B cell (primary cell): ENCODE measurements at regions of chr11 and their contacts with region 1.

Region 1: GRCh38 chr11:6234387-6235107 is at the start of gene FHIP1B:
- DNase-seq: peak; percentile 100
- ATAC-seq: peak; percentile 92
- H3K4me3 ChIP-seq: peak within 1 kb of the TSS; percentile 71 to 90 (median 87)
- H3K4me3 Mint-ChIP-seq: peak within 1 kb of the TSS; percentile 98
- H3K27ac ChIP-seq: peak within 1 kb of the TSS; percentile 69 to 90
- H3K27ac Mint-ChIP-seq: peak within 1 kb of the TSS; percentile 91
- H3K4me1 ChIP-seq: peaks cover 7 to 13% of the 10 kb centered on the region in 2 donors
- H3K4me1 Mint-ChIP-seq: peaks cover 29% of the 10 kb centered on the region
- H3K27me3 ChIP-seq: peaks cover 0 to 9% (median 2%) of the 10 kb centered on the region in 4 experiments
- H3K27me3 Mint-ChIP-seq: no peaks in the 10 kb centered on the region
- CTCF ChIP-seq: no peak
- total RNA-seq, gene FHIP1B: 44.1 and 48.3 TPM in 2 replicates

Region 2: DNA sequence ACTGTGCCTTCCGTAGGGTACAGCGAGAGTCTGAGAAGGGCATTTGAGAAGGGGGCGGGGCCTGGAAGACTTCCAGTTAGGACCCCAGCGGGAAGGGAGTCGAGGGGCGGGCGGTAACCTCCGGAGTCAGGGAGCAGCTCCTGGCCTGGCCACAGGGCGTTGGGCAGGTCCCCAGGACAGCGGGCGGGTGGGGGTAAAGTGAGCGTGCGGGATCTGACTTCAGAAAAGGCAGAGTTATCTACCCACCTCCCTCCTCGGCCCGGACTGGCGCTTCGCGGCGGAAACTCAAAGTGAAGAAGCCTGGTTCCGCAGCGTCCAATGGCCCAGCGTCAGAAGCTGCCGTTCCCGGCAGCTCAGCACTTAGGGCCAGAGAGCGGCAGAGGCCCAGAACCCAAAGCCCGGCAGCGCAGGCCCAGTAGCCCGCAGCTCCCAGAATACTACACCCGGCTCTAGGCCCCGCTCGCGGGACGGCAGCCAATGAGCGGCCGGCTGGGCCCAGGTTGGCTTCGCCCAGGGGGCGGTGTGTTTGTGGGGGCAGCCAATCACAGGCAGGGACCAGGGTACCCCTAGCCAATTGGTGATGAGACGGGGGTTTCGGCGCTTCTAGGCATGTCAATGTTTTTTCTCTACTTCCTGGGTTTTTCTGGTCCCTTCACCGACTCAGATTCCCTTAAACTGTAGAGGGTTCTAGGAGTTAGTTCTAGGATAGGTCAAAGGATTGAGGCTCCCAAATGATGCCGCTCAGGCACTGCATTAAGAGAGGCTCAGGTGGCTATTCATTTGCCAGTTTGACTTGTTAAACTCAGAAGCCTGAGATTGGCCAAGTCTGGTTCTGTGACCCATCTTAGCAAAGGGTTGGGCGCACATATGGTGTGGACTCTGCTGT is 1626.5 kb before region 1 on chr11 and contains the start of gene TRIM68:
- CTCF ChIA-PET with region 1: no interaction called
- POLR2A ChIA-PET with region 1: no interaction called
- intact Hi-C with region 1: loop called (anchors 10 kb)
- DNase-seq: peak; percentile 93
- ATAC-seq: peak; percentile 99
- H3K4me3 ChIP-seq: peak within 1 kb of the TSS; percentile 65 to 89 (median 79)
- H3K4me3 Mint-ChIP-seq: peak within 1 kb of the TSS; percentile 97
- H3K27ac ChIP-seq: peak within 1 kb of the TSS; percentile 72 to 93
- H3K27ac Mint-ChIP-seq: peak within 1 kb of the TSS; percentile 94
- H3K4me1 ChIP-seq: peaks cover 21 to 29% of the 10 kb centered on the region in 2 donors
- H3K4me1 Mint-ChIP-seq: peaks cover 45% of the 10 kb centered on the region
- H3K27me3 ChIP-seq: no peaks in the 10 kb centered on the region
- H3K27me3 Mint-ChIP-seq: no peaks in the 10 kb centered on the region
- CTCF ChIP-seq: no peak
- total RNA-seq, gene TRIM68: 19.8 and 21.7 TPM in 2 replicates

Region 3: DNA sequence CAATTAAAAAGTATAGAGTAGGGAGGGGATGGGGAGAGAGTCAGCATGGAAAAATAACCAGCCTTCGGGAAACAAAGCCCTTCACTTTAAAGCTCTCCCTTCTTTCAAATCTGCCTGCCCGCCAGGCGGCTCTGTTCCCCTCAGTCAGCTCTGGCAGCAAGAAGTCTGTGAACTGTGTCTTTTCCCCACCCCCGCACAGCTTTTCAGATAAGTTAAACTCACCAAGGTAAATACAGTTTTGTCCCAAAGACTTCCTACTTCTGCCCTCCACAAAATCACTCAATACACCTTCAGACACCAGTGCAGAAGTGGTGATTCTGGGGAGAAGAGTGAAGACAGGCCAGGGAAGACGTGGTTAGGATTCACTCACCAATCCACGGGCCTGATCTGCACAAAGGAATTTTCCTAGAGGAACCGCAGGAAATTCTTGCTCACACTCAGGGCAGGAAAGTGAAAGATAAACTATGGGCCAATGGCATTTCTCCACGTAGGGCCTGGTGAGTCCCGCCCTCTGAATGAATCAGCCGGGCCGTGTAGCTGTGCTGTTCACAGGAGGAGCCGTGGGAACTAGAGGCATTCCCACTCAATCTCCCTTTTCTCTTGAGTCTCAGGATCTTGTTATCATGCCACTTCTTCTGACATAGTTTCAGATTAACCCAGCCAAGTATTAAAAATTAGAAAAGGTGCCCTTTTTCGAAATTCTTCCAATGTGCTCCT is 549.7 kb before region 1 on chr11 and contains the start of gene TRIM5:
- CTCF ChIA-PET with region 1: interaction called, 3 read pairs
- POLR2A ChIA-PET with region 1: no interaction called
- intact Hi-C with region 1: loop called (anchors 2 kb)
- DNase-seq: peak; percentile 91
- ATAC-seq: peak; percentile 75
- H3K4me3 ChIP-seq: peak within 1 kb of the TSS; percentile 61 to 94 (median 72)
- H3K4me3 Mint-ChIP-seq: peak within 1 kb of the TSS; percentile 90
- H3K27ac ChIP-seq: peak within 1 kb of the TSS; percentile 81 to 89
- H3K27ac Mint-ChIP-seq: peak within 1 kb of the TSS; percentile 90
- H3K4me1 ChIP-seq: peaks cover 20 to 35% of the 10 kb centered on the region in 2 donors
- H3K4me1 Mint-ChIP-seq: peaks cover 44% of the 10 kb centered on the region
- H3K27me3 ChIP-seq: no peaks in the 10 kb centered on the region
- H3K27me3 Mint-ChIP-seq: no peaks in the 10 kb centered on the region
- CTCF ChIP-seq: peak; percentile 79
- total RNA-seq, gene TRIM5: 35.2 and 39.5 TPM in 2 replicates

Region 4: GRCh38 chr11:6245536-6245935 is 11.0 kb after region 1 on chr11:
- CTCF ChIA-PET with region 1: no interaction called
- POLR2A ChIA-PET with region 1: no interaction called
- intact Hi-C with region 1: no loop called
- DNase-seq: no peak
- ATAC-seq: no peak
- H3K4me3 ChIP-seq: no peak overlapping the region
- H3K4me3 Mint-ChIP-seq: no peak overlapping the region
- H3K27ac ChIP-seq: no peak overlapping the region
- H3K27ac Mint-ChIP-seq: no peak overlapping the region
- H3K4me1 ChIP-seq: no peaks in the 10 kb centered on the region
- H3K4me1 Mint-ChIP-seq: no peaks in the 10 kb centered on the region
- H3K27me3 ChIP-seq: peaks cover 0 to 5% (median 2%) of the 10 kb centered on the region in 4 experiments
- H3K27me3 Mint-ChIP-seq: peaks cover 35% of the 10 kb centered on the region
- CTCF ChIP-seq: no peak

Region 5: GRCh38 chr11:6269994-6270393 is 35.4 kb after region 1 on chr11:
- CTCF ChIA-PET with region 1: no interaction called
- POLR2A ChIA-PET with region 1: no interaction called
- intact Hi-C with region 1: no loop called
- DNase-seq: no peak
- ATAC-seq: no peak
- H3K4me3 ChIP-seq: no peak overlapping the region
- H3K4me3 Mint-ChIP-seq: no peak overlapping the region
- H3K27ac ChIP-seq: no peak overlapping the region
- H3K27ac Mint-ChIP-seq: no peak overlapping the region
- H3K4me1 ChIP-seq: no peaks in the 10 kb centered on the region
- H3K4me1 Mint-ChIP-seq: no peaks in the 10 kb centered on the region
- H3K27me3 ChIP-seq: peaks cover 0 to 10% (median 4%) of the 10 kb centered on the region in 4 experiments
- H3K27me3 Mint-ChIP-seq: peaks cover 39% of the 10 kb centered on the region
- CTCF ChIP-seq: no peak

Region 6: DNA sequence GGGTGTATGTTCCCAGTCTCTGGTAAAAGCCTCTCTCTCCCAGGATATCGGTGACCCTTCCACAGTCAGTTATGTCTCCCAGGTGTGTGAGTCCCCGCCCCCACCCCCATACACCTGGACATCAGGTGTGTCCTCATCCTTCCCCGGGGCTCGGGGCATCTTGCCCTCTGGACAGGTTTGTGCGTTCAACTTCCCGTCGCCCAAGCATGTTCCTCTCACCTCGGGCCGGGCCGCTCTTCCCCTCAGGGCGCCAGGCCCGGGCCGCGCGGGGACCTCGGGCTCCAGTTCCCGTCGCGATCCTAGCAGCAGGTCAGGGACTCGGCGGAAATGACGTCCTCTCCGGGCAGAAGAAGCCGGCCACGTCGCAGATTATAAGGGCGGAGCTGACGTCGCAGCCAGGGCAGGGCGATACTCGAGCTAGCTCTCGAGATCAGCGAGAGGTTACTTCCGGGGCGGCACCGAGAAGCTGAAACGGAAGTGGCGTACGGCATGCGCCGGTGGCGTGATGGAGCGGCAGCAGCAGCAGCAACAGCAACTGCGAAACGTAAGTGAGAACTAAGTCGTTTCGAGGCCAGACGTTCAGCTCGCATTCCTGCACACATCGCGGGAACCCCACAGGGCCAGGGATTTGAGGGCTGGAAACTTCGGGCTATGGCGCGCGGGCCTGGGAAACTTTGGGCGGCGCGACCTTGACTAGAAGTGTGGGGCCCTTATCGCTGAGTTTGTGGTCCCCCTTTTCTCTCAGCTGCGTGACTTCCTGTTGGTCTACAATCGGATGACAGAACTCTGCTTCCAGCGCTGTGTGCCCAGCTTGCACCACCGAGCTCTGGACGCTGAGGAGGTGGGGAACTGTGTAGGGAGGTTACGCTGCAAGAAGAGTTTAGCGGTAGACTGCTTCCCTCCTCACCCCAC is 246.7 kb after region 1 on chr11 and contains the starts of genes ARFIP2 and TIMM10B:
- CTCF ChIA-PET with region 1: no interaction called
- POLR2A ChIA-PET with region 1: no interaction called
- intact Hi-C with region 1: loop called (anchors 2 kb)
- DNase-seq: peak; percentile 98
- ATAC-seq: peak; percentile 96
- H3K4me3 ChIP-seq: peak within 1 kb of the TSS; percentile 26 to 92 (median 83)
- H3K4me3 Mint-ChIP-seq: peak within 1 kb of the TSS; percentile 97
- H3K27ac ChIP-seq: peak within 1 kb of the TSS; percentile 90 to 96
- H3K27ac Mint-ChIP-seq: peak within 1 kb of the TSS; percentile 97
- H3K4me1 ChIP-seq: peaks cover 20 to 27% of the 10 kb centered on the region in 2 donors
- H3K4me1 Mint-ChIP-seq: peaks cover 39% of the 10 kb centered on the region
- H3K27me3 ChIP-seq: no peaks in the 10 kb centered on the region
- H3K27me3 Mint-ChIP-seq: no peaks in the 10 kb centered on the region
- CTCF ChIP-seq: no peak
- total RNA-seq, gene ARFIP2: 46.8 and 47.5 TPM in 2 replicates
- total RNA-seq, gene TIMM10B: 62.1 and 63.7 TPM in 2 replicates

Region 7: DNA sequence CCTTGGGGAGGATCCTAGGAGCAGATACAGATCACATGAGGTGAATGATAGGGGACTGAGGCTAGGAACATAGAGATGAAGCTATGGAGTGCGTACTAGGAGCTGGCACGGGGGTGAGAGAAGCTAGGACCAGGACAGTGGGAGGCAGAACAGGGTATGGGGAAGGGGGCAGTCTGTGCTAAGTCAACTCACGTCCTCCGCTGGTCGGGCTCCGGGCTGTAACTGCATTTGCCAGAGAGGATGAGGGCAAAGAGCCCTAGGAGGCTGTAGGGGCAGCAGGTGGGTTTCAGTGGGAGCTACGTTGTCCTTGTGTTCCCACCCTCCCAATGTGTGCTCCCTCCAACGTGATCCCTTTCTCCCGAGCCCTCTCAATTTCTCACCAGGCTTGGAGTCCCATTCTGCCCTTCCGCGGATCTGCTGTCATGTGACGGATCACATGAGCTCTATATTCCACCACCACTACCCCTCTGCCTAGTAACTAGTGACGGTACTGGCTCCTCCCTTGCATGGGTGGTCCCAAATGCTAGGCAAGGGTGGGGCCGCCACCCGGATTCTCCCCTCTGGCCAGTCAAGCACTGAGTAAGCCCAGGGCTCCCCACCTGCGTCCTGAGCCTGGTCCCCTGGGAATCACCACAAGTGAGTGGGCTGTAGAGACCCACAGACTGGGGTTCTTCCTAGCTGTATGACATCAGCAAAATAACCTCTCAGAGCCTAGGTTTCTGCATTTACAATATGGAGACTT is 384.6 kb after region 1 on chr11 and contains the start of gene TPP1:
- CTCF ChIA-PET with region 1: no interaction called
- POLR2A ChIA-PET with region 1: no interaction called
- intact Hi-C with region 1: loop called (anchors 2 kb)
- DNase-seq: peak; percentile 97
- ATAC-seq: peak; percentile 92
- H3K4me3 ChIP-seq: peak within 1 kb of the TSS; percentile 82 to 100 (median 96)
- H3K4me3 Mint-ChIP-seq: no peak within 1 kb of the TSS
- H3K27ac ChIP-seq: peak within 1 kb of the TSS; percentile 94 to 97
- H3K27ac Mint-ChIP-seq: no peak within 1 kb of the TSS
- H3K4me1 ChIP-seq: peaks cover 19 to 33% of the 10 kb centered on the region in 2 donors
- H3K4me1 Mint-ChIP-seq: peaks cover 11% of the 10 kb centered on the region
- H3K27me3 ChIP-seq: no peaks in the 10 kb centered on the region
- H3K27me3 Mint-ChIP-seq: no peaks in the 10 kb centered on the region
- CTCF ChIP-seq: no peak
- total RNA-seq, gene TPP1: 191 and 200 TPM in 2 replicates

Region 8: DNA sequence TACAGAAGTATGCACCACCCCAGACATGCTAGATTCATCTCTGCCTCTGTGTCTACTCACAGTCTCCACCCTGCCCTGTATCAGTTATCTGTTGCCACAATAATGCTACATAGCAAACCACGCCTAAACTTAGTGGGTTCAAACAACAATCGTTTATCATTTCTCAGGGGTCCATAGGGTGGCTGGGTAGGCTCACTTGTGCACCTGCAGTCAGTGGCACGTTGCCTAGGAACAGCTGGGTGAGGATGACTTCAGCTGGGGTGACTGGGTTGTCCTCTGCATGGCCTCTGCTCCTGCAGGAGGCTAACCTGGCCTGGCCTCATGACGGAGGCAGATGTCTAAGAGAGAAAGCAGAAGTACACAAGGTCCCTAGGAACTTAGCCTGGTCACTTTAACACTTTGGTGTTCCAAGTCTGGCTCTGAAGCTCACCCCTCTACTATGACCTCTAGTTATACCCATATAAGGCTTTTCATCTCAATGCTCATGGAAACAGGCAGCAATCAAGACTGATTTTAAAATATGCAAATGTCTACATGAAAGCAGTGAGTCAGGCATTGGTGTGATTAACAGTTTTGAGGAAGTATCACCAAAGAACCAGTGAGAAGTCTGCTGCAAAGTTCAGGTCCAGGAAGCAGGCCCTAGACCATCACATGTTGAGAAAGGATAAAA is 1261.5 kb after region 1 on chr11:
- CTCF ChIA-PET with region 1: no interaction called
- POLR2A ChIA-PET with region 1: no interaction called
- intact Hi-C with region 1: loop called (anchors 5 kb)
- DNase-seq: peak; percentile 82
- ATAC-seq: peak; percentile 83
- H3K4me3 ChIP-seq: no peak overlapping the region
- H3K4me3 Mint-ChIP-seq: peak overlapping the region; percentile 76
- H3K27ac ChIP-seq: peak overlapping the region; percentile 79 to 90
- H3K27ac Mint-ChIP-seq: peak overlapping the region; percentile 94
- H3K4me1 ChIP-seq: peaks cover 67 to 73% of the 10 kb centered on the region in 2 donors
- H3K4me1 Mint-ChIP-seq: peaks cover 66% of the 10 kb centered on the region
- H3K27me3 ChIP-seq: no peaks in the 10 kb centered on the region
- H3K27me3 Mint-ChIP-seq: no peaks in the 10 kb centered on the region
- CTCF ChIP-seq: no peak